Head of caudate nucleus (tissue), 42 donors: ENCODE measurements at regions of chr10 and their contacts with region 1.

Region 1: DNA sequence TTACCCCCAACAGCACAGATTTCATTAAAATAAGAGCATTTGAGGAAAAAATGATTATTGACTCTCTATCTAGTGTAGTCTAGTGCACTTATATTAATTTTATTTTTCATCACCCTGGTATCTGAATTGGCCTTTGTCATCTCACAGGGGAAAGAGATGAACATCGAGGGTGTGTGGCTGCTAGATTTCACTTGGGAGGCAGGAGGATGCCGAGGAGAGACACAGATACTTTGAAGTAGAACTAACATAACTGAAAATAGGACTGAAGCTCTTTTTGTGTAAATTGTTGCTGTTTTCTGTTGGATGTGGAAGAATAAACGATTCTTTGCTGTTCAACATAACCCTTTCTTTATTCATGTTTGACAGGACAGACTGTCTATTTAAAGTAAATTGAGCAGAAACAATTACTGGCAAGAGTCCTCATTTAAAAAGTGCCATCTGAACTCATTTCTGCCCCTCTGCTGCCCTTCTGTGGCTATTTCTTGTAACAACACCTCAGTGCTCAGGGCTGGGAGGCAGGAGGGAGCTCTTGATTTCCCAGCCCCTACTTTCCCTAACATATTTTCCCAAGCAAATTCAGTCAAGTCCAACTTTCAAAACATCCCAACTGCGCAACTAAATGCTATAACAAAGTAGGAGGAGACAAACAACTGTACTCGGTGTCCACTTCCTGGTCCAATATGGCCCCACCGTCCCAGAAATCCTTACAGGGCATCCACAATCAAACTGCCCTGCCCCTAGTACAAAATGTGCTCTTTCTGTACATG is 15.6 kb downstream of the LYZL1 start:
- DNase-seq: peak; percentile 21 to 90 (median 72)

Region 2: GRCh38 chr10:29131952-29132820 is 172.3 kb before region 1 on chr10:
- intact Hi-C with region 1: loop called (anchors 5 kb)
- DNase-seq: no peak

Region 3: DNA sequence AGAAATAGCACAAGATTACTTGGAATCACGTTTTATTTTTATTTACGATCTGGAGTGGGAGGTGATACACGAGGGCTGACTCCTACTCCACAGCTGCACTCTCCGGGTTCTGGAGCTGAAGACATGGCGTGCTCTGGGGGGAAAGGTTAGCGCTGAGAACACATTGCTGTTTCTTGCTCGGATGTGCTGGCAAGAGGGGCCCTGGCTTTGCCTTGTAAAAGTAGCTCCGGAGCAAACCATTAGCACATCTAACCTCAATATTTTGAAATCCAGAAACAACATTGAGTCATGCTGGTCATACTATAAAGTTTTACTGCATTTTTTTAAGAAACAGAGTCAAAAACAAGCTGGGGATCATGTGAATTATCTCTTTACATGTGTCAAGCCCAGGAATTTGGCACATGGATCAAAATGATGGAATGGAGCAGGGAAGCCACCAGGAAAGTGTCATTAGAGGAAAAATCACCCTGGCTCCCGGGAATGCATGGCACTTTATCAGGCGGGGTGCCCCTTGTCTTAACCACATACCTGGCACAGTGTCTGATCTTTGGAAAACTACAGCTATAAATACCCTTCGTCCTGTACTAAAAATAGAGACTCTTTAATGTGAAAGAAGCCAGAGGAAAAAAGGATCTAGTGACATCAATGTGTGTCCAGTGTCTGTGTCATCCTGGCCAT is 47.2 kb before region 1 on chr10:
- intact Hi-C with region 1: loop called (anchors 10 kb)
- DNase-seq: no peak